Gastrocnemius medialis (tissue), 4 donors: ENCODE measurements at regions of chr6 and their contacts with region 1.

Region 1: GRCh38 chr6:593139-593906 is 63.6 kb downstream of the HUS1B start:
- DNase-seq: no peak
- ATAC-seq: peak; percentile 54 to 74
- H3K4me3 ChIP-seq: no peak overlapping the region
- H3K27ac ChIP-seq: no peak overlapping the region
- H3K4me1 ChIP-seq: no peaks in the 10 kb centered on the region
- H3K27me3 ChIP-seq: no peaks in the 10 kb centered on the region
- CTCF ChIP-seq: peak; percentile 58 to 81 (median 72)
- POLR2A ChIP-seq: no peak

Region 2: GRCh38 chr6:379367-380181 is 213.7 kb before region 1 on chr6:
- in situ Hi-C with region 1: no loop called
- intact Hi-C with region 1: no loop called
- DNase-seq: no peak
- ATAC-seq: peak in 1 of 2 donors; percentile 4
- H3K4me3 ChIP-seq: no peak overlapping the region
- H3K27ac ChIP-seq: no peak overlapping the region
- H3K4me1 ChIP-seq: no peaks in the 10 kb centered on the region
- H3K27me3 ChIP-seq: peaks cover 3 to 27% (median 20%) of the 10 kb centered on the region in 3 donors
- CTCF ChIP-seq: no peak
- POLR2A ChIP-seq: no peak

Region 3: GRCh38 chr6:484086-484745 is 109.1 kb before region 1 on chr6:
- in situ Hi-C with region 1: no loop called
- intact Hi-C with region 1: no loop called
- DNase-seq: no peak
- ATAC-seq: no peak
- H3K4me3 ChIP-seq: no peak overlapping the region
- H3K27ac ChIP-seq: no peak overlapping the region
- H3K4me1 ChIP-seq: no peaks in the 10 kb centered on the region
- H3K27me3 ChIP-seq: no peaks in the 10 kb centered on the region
- CTCF ChIP-seq: no peak
- POLR2A ChIP-seq: no peak

Region 4: GRCh38 chr6:692855-693722 is 99.8 kb after region 1 on chr6 and contains the start of gene EXOC2:
- in situ Hi-C with region 1: no loop called
- intact Hi-C with region 1: loop called (anchors 5 kb)
- DNase-seq: peak; percentile 58 to 71
- ATAC-seq: peak; percentile 89 to 95
- H3K4me3 ChIP-seq: peak within 1 kb of the TSS; percentile 74 to 90 (median 86)
- H3K27ac ChIP-seq: peak within 1 kb of the TSS; percentile 71 to 83 (median 80)
- H3K4me1 ChIP-seq: peaks cover 16 to 18% of the 10 kb centered on the region in 2 donors
- H3K27me3 ChIP-seq: no peaks in the 10 kb centered on the region
- CTCF ChIP-seq: no peak
- POLR2A ChIP-seq: peak; percentile 43 to 70
- total RNA-seq, gene EXOC2: 12.6 to 16.4 (median 15.0) TPM

Region 5: DNA sequence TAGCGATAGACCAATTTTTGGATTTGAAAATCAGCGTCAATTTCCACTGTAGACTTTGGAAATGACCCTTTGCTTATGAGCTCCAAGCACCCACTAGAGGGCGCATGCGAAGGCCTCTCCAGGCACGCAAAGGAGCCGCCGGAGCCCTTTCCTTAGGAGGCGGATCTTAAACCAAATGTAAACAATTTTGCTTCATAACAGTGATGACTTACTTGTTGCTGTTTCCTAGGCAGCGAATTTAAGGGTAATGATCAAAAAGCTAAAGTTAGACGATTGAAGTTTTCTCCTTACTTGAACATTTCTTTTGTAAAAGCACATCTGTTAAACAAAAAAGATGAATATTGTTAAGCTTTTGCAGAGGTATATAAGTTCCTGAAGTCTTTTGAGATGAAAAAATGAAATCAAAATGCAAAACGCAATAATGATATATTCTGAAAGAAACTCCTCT is 128.8 kb after region 1 on chr6:
- in situ Hi-C with region 1: no loop called
- intact Hi-C with region 1: loop called (anchors 10 kb)
- DNase-seq: peak; percentile 32 to 38
- ATAC-seq: peak in 1 of 2 donors; percentile 33
- H3K4me3 ChIP-seq: no peak overlapping the region
- H3K27ac ChIP-seq: no peak overlapping the region
- H3K4me1 ChIP-seq: no peaks in the 10 kb centered on the region
- H3K27me3 ChIP-seq: peaks cover 0 to under 1% (median 0%) of the 10 kb centered on the region in 3 donors
- CTCF ChIP-seq: peak; percentile 47 to 88 (median 56)
- POLR2A ChIP-seq: no peak

Region 6: DNA sequence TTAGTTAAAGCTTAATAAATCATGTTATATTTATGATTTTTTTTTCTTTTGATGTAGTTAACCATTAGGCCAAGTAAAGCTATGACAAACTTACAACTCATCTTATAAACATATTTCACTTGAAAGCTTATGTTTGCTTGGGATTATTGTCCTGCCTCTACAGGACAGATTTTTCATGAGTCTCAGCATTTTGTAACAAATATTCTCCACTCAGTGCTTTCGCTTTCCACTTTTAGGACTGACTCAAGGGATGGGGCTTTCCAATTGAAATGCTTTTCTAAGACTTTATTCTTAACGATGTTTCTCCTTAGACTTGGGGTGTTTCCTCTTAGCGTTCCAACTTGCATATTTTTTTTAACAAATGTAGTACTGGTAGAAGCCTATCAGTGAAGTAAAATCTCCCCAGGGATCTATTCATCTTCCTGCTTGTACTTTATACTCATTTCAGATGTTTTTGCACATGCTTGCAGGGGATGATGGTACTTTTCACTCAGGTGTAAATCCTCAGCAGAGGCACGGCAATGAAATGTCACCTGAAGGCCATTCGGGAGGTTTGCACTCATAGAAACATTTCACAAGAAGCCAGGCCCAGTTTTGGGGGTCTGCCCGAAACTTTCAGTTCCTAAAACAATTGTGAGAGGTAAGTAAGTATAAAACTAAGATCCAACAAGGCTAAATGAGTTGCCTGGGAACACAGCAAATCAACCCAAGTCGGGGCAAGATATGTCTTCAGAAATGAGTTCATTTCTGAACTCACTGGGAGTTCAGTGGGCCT is 420.5 kb after region 1 on chr6:
- in situ Hi-C with region 1: no loop called
- intact Hi-C with region 1: no loop called
- DNase-seq: no peak
- ATAC-seq: no peak
- H3K4me3 ChIP-seq: no peak overlapping the region
- H3K27ac ChIP-seq: no peak overlapping the region
- H3K4me1 ChIP-seq: no peaks in the 10 kb centered on the region
- H3K27me3 ChIP-seq: no peaks in the 10 kb centered on the region
- CTCF ChIP-seq: no peak
- POLR2A ChIP-seq: no peak

Region 7: GRCh38 chr6:1396952-1397868 is 803.9 kb after region 1 on chr6:
- in situ Hi-C with region 1: loop called (anchors 10 to 25 kb)
- intact Hi-C with region 1: no loop called
- DNase-seq: peak in 1 of 2 donors; percentile 35
- ATAC-seq: peak; percentile 56 to 64
- H3K4me3 ChIP-seq: no peak overlapping the region
- H3K27ac ChIP-seq: no peak overlapping the region
- H3K4me1 ChIP-seq: peaks cover 0 to 7% of the 10 kb centered on the region in 2 donors
- H3K27me3 ChIP-seq: peaks cover 57 to 65% (median 61%) of the 10 kb centered on the region in 3 donors
- CTCF ChIP-seq: peak; percentile 51 to 91 (median 73)
- POLR2A ChIP-seq: no peak

Region 8: DNA sequence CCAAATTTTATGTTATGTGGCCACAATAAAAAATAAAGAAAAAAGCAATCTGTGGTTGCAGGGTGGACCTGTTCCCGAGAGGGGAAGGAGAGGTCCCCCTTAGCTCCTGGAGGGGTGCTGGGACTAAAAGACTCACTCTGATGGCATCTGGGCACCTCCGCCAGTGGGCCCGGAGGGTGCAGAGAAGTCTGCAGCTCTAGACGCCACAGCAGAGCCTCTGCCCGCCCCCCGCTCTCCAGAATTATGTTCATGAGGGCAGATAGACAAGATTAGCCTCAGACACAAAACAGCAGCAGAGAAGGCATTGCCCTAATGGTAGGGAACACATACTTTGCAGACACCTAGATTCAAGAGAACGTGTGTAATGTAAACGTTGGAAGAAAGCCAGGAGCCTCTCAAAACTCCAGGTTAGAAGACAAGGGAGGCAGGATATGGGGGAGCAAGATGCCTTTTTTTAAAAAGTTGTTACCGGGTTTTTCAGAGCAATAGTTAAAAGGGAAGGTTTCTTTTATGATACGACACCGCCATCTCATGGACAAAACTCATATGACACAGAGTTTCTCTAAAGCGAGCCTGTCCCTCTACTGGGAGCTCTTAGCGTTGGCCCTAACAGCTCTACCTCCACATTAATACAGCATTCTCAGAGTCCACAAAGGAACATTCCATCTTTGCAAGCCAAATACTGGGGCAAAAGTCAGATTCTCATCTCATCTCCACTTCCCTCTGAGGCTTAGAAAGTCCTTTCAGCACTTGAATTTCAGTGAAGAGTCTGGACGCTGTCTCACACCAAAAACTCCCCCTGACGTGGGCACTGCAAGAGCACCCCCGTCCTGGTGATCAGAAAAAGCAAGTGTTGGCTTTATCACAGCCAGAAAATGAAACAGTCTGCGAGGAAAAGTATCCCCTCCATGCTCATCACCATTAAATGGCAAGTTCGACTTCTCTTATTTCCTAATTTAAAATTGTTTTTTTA is 843.3 kb after region 1 on chr6:
- in situ Hi-C with region 1: no loop called
- intact Hi-C with region 1: loop called (anchors 5 kb)
- DNase-seq: no peak
- ATAC-seq: peak; percentile 65 to 81
- H3K4me3 ChIP-seq: no peak overlapping the region
- H3K27ac ChIP-seq: no peak overlapping the region
- H3K4me1 ChIP-seq: no peaks in the 10 kb centered on the region
- H3K27me3 ChIP-seq: peaks cover 0 to 18% (median 15%) of the 10 kb centered on the region in 3 donors
- CTCF ChIP-seq: peak; percentile 61 to 70 (median 65)
- POLR2A ChIP-seq: no peak